Mammary epithelial cell (primary cell): ENCODE measurements at regions of chr9 and their contacts with region 1.

Region 1: DNA sequence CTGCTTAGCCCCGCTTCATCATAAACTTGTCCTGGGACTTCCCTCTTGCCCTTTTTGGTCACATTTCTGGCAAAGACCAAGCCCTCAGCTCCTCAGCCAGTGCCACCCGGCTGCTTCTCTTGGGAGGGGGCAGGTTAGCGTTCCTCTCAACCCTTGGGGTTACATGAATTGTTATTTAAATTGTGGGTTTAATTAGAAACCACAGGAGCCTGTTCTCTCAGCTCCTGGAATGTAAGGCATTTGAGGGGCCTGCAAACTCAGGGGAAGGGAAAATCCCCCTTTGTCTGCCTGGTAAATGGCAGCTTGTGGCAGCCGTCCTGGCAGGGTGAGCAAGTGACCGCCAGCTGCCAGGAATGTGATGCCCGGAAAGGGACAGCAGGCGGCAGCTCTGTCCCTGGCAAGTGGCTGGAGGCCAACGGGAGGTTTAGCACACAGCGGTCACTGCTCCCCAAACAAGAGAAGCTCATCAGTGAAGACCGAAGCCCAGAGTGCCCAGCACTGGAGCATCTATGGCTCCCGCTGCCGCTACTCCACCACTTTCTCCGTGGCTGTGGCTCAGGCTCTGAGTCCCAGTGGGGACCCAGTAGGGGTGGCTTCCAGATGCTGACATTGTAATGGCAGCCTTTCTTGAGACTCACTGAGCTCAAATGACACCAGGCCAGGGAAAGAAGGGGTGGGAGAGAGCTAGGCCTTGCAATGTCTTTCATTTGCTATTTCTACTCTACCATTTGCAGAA is 51.7 kb downstream of the SHB start:
- DNase-seq: peak; percentile 52
- H3K4me3 ChIP-seq: no peak overlapping the region
- H3K27ac ChIP-seq: peak overlapping the region; percentile 44
- H3K4me1 ChIP-seq: peaks cover 54% of the 10 kb centered on the region
- H3K27me3 ChIP-seq: no peaks in the 10 kb centered on the region
- CTCF ChIP-seq: peak; percentile 20 to 68

Region 2: DNA sequence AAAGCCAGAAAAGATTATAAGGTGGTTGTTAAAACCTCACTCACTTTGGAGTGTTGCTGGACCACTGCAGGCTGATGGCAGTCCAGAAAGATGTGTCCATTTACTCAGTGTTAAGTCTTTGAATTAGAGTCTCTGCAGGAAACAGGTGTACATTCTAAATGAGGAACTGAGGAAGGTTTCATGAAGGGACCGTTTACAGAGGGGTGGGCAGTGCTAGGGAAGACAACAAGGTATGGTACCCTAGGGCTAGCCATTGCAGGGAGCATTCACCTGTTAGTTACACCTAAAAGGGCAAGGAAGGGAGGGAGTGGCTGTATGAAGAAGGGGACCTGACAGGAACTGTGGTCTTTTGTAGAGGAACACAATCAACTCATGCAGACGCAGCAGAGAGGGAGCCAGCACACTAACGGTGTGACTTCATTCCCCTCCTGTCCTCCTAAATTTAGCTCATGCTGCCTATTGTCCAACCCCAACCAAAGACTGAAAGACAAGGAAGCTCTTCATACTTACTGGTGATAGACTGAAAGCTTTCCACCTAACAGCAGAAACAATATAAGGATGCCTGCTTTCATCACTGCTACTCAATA is 951.1 kb before region 1 on chr9:
- CTCF ChIA-PET with region 1: no interaction called
- dilution Hi-C with region 1: no loop called
- in situ Hi-C with region 1: no loop called
- intact Hi-C with region 1: no loop called
- DNase-seq: no peak
- H3K4me3 ChIP-seq: no peak overlapping the region
- H3K27ac ChIP-seq: no peak overlapping the region
- H3K4me1 ChIP-seq: no peaks in the 10 kb centered on the region
- H3K27me3 ChIP-seq: peaks cover 2% of the 10 kb centered on the region
- CTCF ChIP-seq: no peak

Region 3: DNA sequence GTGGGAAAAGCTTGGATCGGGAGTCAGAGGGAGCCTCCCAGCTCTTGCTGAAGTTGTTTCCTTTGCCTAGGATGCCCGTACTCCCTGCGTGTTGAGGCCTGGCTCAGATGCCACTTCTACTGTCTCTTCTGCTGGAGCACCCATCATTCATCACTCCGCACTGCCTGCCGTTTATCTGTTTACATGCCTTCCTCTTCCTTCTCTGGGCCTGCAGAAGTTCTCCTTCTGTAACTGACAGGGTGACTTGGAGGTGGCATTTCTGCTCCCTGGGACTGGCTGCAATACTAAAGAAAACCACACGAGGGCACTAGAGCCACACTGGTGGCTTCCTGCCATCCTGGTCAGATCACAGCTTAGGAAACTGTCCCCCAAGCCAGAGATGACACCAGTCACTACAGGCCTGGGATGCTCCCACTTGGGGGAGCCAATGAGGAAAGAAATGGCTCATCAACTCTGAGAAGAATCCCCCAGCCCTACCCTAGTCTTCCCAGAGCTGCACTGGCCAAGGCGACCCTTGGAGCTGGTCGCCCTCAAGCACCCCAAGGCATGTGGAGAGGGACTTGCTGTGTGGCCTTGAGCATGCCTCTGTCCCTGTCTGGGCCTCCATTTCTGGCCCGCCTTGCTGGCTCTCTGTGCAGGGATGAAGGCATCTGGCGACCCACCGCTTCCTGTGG is 103.7 kb before region 1 on chr9:
- CTCF ChIA-PET with region 1: interaction called, 7 read pairs
- dilution Hi-C with region 1: no loop called
- in situ Hi-C with region 1: no loop called
- intact Hi-C with region 1: loop called (anchors 2 kb)
- DNase-seq: peak; percentile 65
- H3K4me3 ChIP-seq: no peak overlapping the region
- H3K27ac ChIP-seq: no peak overlapping the region
- H3K4me1 ChIP-seq: peaks cover 18% of the 10 kb centered on the region
- H3K27me3 ChIP-seq: no peaks in the 10 kb centered on the region
- CTCF ChIP-seq: peak; percentile 96 to 98

Region 4: DNA sequence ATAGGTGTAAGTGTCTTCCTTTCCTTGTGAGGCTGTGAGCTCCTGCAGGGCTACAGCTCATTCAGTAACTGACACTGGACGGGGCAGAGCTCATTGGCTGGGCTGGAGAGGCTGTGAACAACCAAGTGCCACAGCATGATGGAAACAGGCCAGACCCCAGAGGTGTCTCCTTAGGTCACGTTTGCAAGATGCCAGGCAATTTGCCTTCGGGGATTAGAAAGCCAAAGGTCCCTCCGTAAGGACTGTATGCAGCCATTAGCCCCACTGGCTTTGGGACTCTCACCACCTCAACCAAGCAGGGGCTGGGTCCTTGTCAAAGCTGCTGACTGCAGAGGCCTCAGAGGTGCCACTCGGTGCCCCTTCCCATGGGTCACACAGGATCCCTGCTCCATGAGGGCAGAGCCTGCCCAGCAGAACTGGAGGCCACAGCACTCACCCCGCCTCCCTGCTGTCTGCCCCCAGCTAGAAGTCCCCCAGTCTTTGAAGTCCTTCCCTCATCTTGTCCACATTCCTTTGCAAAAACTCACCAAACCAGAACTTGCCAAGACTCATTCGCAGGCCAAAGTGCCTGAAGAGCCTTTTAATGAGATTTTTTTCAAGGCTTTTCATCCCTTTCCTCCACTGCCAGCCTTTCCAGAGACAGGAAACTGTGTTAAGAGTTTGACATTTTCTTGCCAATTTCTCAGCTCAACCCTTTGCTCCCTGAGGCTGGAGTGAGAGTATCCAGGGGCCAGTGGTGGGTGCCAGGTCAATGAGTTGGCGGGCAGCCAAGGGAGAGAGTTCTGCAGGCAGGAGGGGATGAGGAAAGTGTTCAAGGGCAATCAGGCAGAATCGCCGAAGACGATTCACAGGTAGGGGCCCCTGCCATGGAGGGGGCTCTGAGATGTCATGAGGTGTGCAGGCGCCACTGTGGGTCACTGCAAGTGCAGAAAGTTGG is 73.7 kb before region 1 on chr9:
- CTCF ChIA-PET with region 1: no interaction called
- dilution Hi-C with region 1: loop called (anchors 5 kb)
- in situ Hi-C with region 1: no loop called
- intact Hi-C with region 1: loop called (anchors 5 kb)
- DNase-seq: peak; percentile 83
- H3K4me3 ChIP-seq: no peak overlapping the region
- H3K27ac ChIP-seq: peak overlapping the region; percentile 3
- H3K4me1 ChIP-seq: peaks cover 52% of the 10 kb centered on the region
- H3K27me3 ChIP-seq: no peaks in the 10 kb centered on the region
- CTCF ChIP-seq: no peak

Region 5: DNA sequence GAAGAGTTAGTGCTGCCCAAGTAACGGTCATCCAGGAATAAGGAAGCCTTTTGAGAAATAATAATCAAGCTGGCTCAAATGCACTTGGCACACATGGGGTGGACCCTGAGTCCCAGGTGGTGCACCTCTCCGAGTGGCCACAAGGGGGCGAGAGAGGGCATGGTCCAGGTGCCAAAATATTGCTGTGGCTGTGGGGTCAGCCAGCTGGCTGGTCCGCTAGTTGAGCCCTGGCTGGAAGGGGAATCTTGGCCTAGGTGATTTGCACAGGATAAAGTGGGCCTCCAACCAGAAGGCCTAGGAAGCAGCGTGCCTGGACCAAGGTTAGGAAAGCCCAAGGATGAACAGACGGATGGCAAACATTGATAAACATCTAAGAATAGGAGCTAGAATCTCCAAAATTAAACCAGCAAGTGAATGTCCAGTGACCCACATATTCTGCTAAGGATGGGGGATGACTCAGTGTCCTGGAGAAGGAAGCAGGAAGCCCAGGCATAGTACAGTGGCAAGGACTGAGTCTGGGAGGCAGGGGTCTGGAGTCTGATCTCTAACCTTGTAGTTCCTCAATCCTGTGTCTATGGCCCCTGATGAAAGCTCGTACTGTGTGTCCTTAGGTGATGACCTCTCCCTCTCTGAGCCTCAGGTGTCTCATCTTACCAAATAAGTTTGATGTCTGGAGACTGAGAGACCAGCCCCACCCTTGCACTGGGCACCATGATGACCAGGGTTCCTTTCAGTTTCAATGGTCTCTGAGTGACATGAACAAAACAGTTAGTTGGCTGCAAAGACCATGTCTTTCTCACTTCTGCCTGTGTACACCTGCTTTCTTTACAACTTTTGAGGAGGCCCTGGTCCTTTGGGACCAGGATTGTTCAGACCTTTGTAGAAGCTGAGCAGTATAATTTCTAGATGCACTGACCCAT is 70.9 kb after region 1 on chr9:
- CTCF ChIA-PET with region 1: no interaction called
- dilution Hi-C with region 1: no loop called
- in situ Hi-C with region 1: no loop called
- intact Hi-C with region 1: loop called (anchors 1 kb)
- DNase-seq: peak; percentile 32
- H3K4me3 ChIP-seq: no peak overlapping the region
- H3K27ac ChIP-seq: no peak overlapping the region
- H3K4me1 ChIP-seq: peaks cover 1% of the 10 kb centered on the region
- H3K27me3 ChIP-seq: no peaks in the 10 kb centered on the region
- CTCF ChIP-seq: peak; percentile 93 to 98

Region 6: DNA sequence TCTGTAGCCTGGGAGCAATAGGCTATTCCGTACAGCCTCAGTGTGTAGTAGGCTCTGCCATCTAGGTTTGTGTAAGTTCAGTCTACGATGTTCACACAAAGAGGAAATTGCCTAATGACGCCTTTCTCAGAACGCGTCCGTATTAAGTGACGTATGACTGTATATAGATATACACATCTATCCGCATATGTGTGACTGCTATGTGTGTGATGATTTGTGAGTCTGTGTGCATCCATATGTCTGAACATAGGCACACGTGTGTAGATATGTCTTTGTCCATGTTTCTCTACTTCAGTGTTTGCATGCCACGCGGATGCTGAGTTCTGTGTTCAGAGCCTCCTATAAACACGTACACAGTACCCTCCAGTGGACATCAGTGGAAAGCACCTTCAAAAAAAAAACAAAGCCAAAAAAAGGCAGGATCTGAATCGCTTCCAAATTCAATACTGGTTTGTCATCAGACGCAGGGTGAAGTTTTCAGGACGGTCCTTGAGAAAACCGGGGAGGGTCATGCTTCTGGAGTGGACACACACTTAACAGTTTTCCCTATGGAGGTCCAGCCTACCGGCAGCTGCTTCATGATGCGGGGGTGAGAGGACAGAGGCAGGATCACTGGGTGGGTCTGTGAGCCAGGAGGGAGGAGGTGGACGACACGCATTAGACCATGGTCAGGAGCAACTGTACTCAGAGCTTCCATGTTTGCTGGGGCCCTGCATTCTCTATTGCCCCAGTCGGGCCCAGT is 345.7 kb after region 1 on chr9:
- CTCF ChIA-PET with region 1: no interaction called
- dilution Hi-C with region 1: no loop called
- in situ Hi-C with region 1: no loop called
- intact Hi-C with region 1: loop called (anchors 2 kb)
- DNase-seq: peak; percentile 61
- H3K4me3 ChIP-seq: no peak overlapping the region
- H3K27ac ChIP-seq: no peak overlapping the region
- H3K4me1 ChIP-seq: peaks cover 3% of the 10 kb centered on the region
- H3K27me3 ChIP-seq: no peaks in the 10 kb centered on the region
- CTCF ChIP-seq: peak; percentile 60 to 71